Mammary epithelial cell (primary cell): ENCODE measurements at regions of chr11 and their contacts with region 1.

Region 1: DNA sequence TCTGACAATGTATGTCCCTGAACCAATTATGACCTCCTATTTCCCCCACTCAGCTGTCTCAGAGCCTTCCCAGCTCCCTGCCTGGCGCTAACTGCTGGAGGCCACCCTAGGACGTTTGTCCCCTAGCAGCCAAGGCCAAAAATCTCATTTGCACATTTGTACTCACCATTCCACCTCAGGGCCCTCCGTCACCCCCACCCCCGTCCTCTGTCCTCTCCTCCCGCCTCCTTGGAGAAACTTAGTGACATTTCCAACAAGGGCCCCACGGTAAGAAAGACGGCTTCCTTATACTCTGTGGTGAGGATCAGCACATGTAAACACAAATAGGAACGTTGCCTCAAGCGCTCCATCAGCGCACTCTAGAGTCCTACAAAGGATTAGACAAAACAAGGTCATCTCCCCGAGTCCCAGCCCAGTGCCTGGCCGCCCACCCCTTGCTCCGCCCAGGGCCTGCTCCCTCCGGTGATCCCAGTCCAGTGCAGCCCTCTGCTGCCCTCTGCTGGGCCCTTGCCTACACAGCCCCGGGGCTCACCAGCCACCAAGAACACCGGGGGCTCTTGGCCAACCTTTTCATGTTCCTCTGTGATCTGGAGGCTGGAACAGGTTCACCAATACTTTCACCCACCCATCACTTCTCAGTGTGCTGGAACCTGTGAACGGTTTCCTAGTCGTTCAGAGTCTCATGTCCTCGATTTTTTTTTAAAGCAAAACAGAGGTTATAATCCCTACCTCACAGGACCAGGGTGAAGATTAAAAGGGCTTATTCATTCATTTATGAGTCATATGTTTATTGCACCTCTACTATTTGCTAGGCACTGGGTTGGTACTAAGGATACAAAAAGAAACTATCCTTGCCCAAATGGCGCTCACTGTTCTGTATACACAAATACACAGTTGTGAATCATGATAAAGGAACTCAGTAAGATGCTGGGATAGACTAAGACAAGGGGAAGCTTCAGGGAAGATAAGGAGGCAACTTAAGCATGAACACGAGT is 15.3 kb upstream of the CTR9 start:
- DNase-seq: peak; percentile 89
- H3K4me3 ChIP-seq: peak overlapping the region; percentile 23 to 44 (median 34)
- H3K27ac ChIP-seq: peak overlapping the region; percentile 78
- H3K4me1 ChIP-seq: peaks cover 11% of the 10 kb centered on the region
- H3K27me3 ChIP-seq: no peaks in the 10 kb centered on the region
- CTCF ChIP-seq: peak; percentile 84 to 98

Region 2: DNA sequence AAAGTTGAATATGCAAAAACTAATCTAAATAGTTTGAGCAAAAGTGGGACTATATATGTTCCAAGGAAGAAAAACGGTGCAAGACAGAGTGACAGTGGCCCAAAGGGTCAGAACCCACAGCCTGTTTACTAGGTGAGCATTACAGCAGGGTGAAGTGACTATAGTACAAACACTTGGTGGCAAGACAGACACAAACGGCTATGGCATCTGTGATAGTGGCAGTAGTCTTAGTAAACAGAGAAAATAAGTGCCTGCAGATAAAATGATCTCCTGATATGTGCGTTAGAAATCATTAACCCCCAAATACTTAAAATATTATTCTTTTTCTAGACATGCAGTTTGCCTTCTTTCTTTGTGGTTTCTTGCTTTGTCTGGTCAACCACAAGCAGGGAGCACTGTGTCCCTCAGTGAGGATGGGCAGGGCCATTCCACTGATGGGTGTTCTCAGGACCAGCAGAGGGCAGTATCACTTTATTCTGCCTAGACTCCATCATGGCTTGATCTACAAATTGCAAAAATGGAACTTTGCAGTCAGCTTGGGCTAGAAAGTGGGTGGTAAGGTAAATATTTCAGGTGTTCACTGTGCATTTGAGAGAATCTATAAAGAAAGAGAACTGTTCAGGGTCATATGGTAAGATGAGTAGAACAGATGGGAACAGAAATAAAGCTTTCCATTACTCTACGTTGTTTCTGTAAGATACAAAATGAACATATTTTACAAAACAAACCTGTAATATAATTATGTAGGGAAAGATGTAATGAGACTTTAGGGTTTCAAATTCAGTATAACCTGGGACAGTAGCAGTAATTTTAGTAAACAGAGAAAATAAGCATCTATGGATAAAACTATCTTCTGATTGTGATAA is 873.7 kb before region 1 on chr11:
- CTCF ChIA-PET with region 1: no interaction called
- dilution Hi-C with region 1: no loop called
- in situ Hi-C with region 1: no loop called
- intact Hi-C with region 1: loop called (anchors 10 kb)
- DNase-seq: peak; percentile 60
- H3K4me3 ChIP-seq: no peak overlapping the region
- H3K27ac ChIP-seq: no peak overlapping the region
- H3K4me1 ChIP-seq: peaks cover 6% of the 10 kb centered on the region
- H3K27me3 ChIP-seq: no peaks in the 10 kb centered on the region
- CTCF ChIP-seq: peak; percentile 90 to 91

Region 3: DNA sequence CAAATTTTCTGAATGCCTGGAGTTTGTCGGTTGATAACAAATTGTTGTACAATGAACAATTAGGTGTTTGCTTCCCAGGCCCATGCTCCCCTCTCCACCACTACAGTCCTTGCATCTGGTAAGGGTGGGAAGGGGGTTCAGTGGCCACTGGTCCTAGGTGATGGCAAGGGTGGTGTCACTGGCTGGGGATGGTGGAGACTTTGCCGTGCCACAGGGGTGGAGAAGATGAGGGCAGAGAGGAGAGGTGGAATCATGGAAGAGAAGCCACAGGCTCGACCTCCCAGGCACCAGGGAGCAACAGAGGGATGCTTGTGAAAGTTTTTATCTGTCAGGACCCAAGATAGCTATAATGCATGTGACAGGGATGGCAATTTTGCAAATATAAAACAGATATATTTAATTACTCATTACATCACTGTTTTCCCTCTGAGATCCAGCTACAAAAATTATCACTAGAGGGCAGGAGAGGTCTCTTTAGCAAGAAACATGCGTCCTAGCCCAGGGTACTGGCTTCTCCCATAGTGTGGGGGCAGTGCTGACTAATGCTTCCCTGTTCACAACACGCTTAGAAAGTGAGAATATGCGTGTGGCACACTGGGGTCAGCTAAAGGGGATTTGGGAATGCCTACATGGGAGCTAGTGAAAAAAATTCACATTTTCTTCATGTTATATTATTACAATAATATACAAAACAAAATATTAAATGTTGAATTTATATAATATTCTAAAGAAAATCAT is 329.8 kb before region 1 on chr11:
- CTCF ChIA-PET with region 1: no interaction called
- dilution Hi-C with region 1: no loop called
- in situ Hi-C with region 1: loop called (anchors 5 kb)
- intact Hi-C with region 1: loop called (anchors 1 kb)
- DNase-seq: peak; percentile 68
- H3K4me3 ChIP-seq: no peak overlapping the region
- H3K27ac ChIP-seq: peak overlapping the region; percentile 15
- H3K4me1 ChIP-seq: peaks cover 19% of the 10 kb centered on the region
- H3K27me3 ChIP-seq: no peaks in the 10 kb centered on the region
- CTCF ChIP-seq: peak; percentile 77 to 80

Region 4: DNA sequence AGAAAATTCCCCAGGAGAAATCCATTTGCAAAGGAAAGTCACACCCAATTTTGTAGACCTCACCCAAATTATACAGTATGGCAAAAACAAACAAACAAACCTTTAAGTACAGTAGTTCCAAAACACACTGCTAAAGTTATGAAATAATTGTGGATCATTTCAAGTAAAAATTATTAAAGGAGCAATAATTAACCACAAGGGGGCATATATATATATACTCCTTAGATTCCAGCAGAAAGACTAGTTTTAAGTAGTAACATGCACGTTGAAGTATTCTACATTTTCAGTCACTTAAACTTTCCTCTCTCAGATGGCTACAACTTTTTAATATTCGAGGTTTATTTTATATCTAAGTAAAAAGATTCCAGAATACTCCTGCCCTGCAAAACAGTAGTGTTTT is 221.6 kb before region 1 on chr11:
- CTCF ChIA-PET with region 1: no interaction called
- dilution Hi-C with region 1: no loop called
- in situ Hi-C with region 1: loop called in 1 of 2 experiments (anchors 10 kb)
- intact Hi-C with region 1: loop called (anchors 1 kb)
- DNase-seq: no peak
- H3K4me3 ChIP-seq: no peak overlapping the region
- H3K27ac ChIP-seq: no peak overlapping the region
- H3K4me1 ChIP-seq: peaks cover 18% of the 10 kb centered on the region
- H3K27me3 ChIP-seq: no peaks in the 10 kb centered on the region
- CTCF ChIP-seq: peak; percentile 22 to 30

Region 5: GRCh38 chr11:10564696-10565318 is 171.0 kb before region 1 on chr11:
- CTCF ChIA-PET with region 1: no interaction called
- dilution Hi-C with region 1: no loop called
- in situ Hi-C with region 1: no loop called
- intact Hi-C with region 1: loop called (anchors 1 kb)
- DNase-seq: no peak
- H3K4me3 ChIP-seq: no peak overlapping the region
- H3K27ac ChIP-seq: no peak overlapping the region
- H3K4me1 ChIP-seq: no peaks in the 10 kb centered on the region
- H3K27me3 ChIP-seq: no peaks in the 10 kb centered on the region
- CTCF ChIP-seq: peak; percentile 31 to 58

Region 6: DNA sequence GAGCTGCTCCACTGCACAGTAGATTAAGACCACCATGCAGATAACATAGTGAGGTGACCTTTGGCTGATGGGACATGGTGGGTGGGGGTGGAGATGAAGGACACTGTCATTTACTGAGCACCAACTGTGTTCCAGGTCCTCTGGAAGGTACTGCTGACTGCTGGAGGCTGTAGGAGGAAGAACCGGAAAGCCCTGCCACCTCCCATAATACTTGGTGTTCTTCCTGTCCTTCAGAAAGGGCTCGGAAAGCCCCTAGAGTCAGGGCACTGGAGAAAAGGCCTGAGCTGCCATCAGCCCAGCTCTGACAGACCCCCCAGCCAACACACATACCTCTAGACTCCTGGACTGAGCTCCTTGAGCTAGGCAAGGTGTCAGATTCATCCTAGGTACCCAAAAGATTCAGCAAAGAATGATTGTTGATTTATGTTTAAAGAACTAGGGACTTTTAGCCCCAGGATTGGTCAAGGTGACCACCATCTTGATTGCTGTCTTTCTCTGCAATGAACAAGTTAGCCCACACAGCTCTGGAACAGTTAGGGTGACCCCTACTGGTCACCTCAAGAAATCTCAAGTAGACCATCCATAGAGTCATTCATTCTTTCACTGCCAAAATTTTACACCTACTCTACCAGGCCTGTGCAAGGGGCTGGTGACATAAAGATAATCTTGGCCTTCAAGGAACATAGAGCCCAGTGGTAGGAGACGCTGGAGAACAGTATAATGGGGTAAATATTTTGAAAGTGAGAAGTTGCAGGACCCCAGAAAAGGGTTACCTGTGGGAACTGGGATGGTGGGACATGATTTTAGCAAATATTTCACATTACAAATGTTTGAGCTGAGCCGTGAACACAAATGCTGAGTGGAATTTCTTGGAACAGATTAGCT is 81.6 kb before region 1 on chr11:
- CTCF ChIA-PET with region 1: no interaction called
- dilution Hi-C with region 1: no loop called
- in situ Hi-C with region 1: no loop called
- intact Hi-C with region 1: loop called (anchors 1 kb)
- DNase-seq: peak; percentile 55
- H3K4me3 ChIP-seq: no peak overlapping the region
- H3K27ac ChIP-seq: no peak overlapping the region
- H3K4me1 ChIP-seq: peaks cover 25% of the 10 kb centered on the region
- H3K27me3 ChIP-seq: no peaks in the 10 kb centered on the region
- CTCF ChIP-seq: peak; percentile 65 to 74